GM18951 (cell line): ENCODE measurements at regions of chr7 and their contacts with region 1.

Region 1: GRCh38 chr7:12490117-12490688 is 80.3 kb upstream of the SCIN start:
- POLR2A ChIP-seq: no peak

Region 2: DNA sequence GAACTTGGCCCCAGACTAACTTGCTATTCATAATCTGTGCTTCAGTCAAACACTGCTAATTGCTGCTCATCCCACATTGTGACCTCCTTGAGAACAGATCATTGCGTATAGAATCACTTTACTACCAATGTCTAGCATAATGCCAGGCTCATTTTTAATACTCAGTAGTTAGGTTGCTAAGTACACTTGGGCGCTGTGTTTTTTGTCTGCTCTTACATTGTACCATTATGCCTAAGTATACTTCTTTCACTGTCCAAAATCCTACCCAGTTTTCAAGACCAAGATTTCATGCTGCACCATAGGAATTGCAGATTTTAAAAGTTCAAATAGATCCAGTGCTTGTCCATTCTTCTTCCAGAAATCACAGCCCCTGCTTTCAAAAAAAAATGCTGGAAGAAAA is 311.9 kb before region 1 on chr7:
- in situ Hi-C with region 1: no loop called
- POLR2A ChIP-seq: no peak

Region 3: DNA sequence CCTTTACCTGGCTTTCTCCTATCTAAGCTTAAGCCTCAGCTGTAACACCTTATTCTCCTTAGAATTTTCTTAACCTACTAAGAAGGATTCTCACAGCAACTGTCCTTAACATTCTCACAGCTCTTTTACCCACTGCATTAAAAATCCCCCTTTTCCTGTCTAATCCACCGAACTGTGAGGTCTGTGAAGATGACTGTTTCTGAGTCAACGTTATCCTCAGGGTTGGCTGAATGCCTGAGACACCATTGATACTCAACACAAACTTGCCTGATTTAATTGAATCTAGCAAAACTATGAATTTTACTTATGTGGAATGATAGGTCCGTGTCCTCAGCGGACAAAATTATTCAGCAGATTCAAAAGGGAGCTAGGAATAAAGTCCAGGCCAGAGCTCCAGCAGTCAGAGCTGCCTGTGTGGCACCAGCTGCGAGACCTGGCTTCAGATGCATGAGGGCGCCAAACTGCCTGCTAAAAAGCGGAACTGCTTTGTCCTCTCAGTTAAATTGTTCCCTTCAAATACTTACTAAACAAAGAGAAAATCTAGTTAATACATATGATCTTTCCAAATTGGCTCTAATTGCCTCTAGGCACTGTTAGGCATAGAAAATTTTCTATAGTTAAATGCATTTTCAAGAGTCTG is 53.2 kb before region 1 on chr7:
- in situ Hi-C with region 1: loop called (anchors 10 kb)
- POLR2A ChIP-seq: no peak

Region 4: GRCh38 chr7:12458520-12459131 is 31.6 kb before region 1 on chr7:
- in situ Hi-C with region 1: loop called (anchors 5 kb)
- POLR2A ChIP-seq: no peak